CD4-positive, alpha-beta memory T cell (primary cell): ENCODE measurements at regions of chr16 and their contacts with region 1.

Region 1: GRCh38 chr16:11619327-11619851 is 32.7 kb upstream of the LITAF start:
- DNase-seq: peak; percentile 42 to 60 (median 57)
- H3K4me3 ChIP-seq: peak overlapping the region in 1 of 2 donors; percentile 25
- H3K4me3 Mint-ChIP-seq: peak overlapping the region; percentile 20 to 83 (median 72)
- H3K27ac ChIP-seq: peak overlapping the region; percentile 29
- H3K27ac Mint-ChIP-seq: peak overlapping the region; percentile 75 to 97 (median 93)
- H3K4me1 ChIP-seq: peaks cover 73% of the 10 kb centered on the region
- H3K4me1 Mint-ChIP-seq: peaks cover 32 to 66% (median 51%) of the 10 kb centered on the region in 4 donors
- H3K27me3 ChIP-seq: no peaks in the 10 kb centered on the region
- H3K27me3 Mint-ChIP-seq: no peaks in the 10 kb centered on the region

Region 2: DNA sequence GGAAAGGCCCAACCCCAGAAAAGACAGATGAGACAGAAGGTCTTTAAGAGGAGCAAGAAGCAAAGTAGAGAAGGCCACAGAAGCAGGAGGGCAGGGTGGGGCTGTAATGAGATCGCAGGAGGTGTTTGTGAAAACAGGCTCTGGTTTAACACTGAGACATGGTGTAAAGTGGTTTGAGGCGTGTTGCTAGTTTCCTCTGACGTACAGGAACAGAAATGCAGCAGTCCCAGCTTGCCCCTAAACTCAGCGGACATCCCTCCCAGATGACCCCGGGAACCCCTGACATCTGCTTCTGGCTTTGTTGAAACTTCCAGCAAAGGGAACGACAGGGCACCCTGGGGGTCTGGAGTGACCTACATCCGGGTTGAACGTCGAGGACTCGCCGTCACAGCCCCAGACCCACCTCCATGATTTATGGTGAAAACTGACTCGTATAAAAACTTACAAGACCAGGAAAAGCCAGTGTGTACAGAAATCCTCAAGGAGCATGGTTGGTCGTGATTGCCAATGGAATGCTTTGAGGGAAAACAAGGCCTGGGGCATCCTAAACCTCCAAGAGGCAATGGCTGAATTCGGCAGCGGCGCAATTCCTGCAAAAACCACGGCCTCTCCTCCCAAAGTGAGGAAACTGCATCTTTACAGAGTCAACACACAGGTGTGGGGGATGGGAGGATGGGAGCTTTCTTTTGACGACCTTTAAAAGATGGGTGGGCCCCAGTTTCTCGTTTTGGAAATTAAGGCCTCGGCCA is 58.5 kb before region 1 on chr16:
- CTCF ChIA-PET with region 1: interaction called, 6 read pairs
- POLR2A ChIA-PET with region 1: interaction called, 51 read pairs
- intact Hi-C with region 1: loop called (anchors 1 kb)
- DNase-seq: peak; percentile 84 to 95 (median 86)
- H3K4me3 ChIP-seq: peak overlapping the region; percentile 37 to 60
- H3K4me3 Mint-ChIP-seq: peak overlapping the region; percentile 59 to 91 (median 79)
- H3K27ac ChIP-seq: peak overlapping the region; percentile 86
- H3K27ac Mint-ChIP-seq: peak overlapping the region; percentile 92 to 100 (median 95)
- H3K4me1 ChIP-seq: peaks cover 89% of the 10 kb centered on the region
- H3K4me1 Mint-ChIP-seq: peaks cover 54 to 91% (median 71%) of the 10 kb centered on the region in 4 donors
- H3K27me3 ChIP-seq: no peaks in the 10 kb centered on the region
- H3K27me3 Mint-ChIP-seq: no peaks in the 10 kb centered on the region

Region 3: GRCh38 chr16:11667824-11668622 is 48.6 kb after region 1 on chr16 and contains the start of gene SNN:
- CTCF ChIA-PET with region 1: interaction called, 3 read pairs
- POLR2A ChIA-PET with region 1: interaction called, 29 read pairs
- intact Hi-C with region 1: no loop called
- DNase-seq: peak; percentile 81 to 85 (median 83)
- H3K4me3 ChIP-seq: peak within 1 kb of the TSS; percentile 47 to 72
- H3K4me3 Mint-ChIP-seq: peak within 1 kb of the TSS; percentile 84 to 92 (median 87)
- H3K27ac ChIP-seq: peak within 1 kb of the TSS; percentile 47
- H3K27ac Mint-ChIP-seq: peak within 1 kb of the TSS; percentile 65 to 95 (median 87)
- H3K4me1 ChIP-seq: peaks cover 74% of the 10 kb centered on the region
- H3K4me1 Mint-ChIP-seq: peaks cover 51 to 80% (median 60%) of the 10 kb centered on the region in 4 donors
- H3K27me3 ChIP-seq: no peaks in the 10 kb centered on the region
- H3K27me3 Mint-ChIP-seq: no peaks in the 10 kb centered on the region
- total RNA-seq, gene SNN: 19.2 to 20.4 TPM